CD4-positive, alpha-beta T cell (primary cell): ENCODE measurements at regions of chr5 and their contacts with region 1.

Region 1: GRCh38 chr5:173615884-173616576 is 420 bp downstream of the BOD1 start:
- DNase-seq: peak; percentile 45 to 89 (median 62)
- ATAC-seq: peak; percentile 55
- H3K4me3 ChIP-seq: peak overlapping the region; percentile 69
- H3K4me3 Mint-ChIP-seq: peak overlapping the region; percentile 95
- H3K27ac ChIP-seq: peak overlapping the region; percentile 81 to 96
- H3K27ac Mint-ChIP-seq: peak overlapping the region; percentile 81
- H3K4me1 ChIP-seq: peaks cover 26% of the 10 kb centered on the region
- H3K4me1 Mint-ChIP-seq: peaks cover 51% of the 10 kb centered on the region
- H3K27me3 ChIP-seq: no peaks in the 10 kb centered on the region
- H3K27me3 Mint-ChIP-seq: no peaks in the 10 kb centered on the region
- CTCF ChIP-seq: peak; percentile 82

Region 2: DNA sequence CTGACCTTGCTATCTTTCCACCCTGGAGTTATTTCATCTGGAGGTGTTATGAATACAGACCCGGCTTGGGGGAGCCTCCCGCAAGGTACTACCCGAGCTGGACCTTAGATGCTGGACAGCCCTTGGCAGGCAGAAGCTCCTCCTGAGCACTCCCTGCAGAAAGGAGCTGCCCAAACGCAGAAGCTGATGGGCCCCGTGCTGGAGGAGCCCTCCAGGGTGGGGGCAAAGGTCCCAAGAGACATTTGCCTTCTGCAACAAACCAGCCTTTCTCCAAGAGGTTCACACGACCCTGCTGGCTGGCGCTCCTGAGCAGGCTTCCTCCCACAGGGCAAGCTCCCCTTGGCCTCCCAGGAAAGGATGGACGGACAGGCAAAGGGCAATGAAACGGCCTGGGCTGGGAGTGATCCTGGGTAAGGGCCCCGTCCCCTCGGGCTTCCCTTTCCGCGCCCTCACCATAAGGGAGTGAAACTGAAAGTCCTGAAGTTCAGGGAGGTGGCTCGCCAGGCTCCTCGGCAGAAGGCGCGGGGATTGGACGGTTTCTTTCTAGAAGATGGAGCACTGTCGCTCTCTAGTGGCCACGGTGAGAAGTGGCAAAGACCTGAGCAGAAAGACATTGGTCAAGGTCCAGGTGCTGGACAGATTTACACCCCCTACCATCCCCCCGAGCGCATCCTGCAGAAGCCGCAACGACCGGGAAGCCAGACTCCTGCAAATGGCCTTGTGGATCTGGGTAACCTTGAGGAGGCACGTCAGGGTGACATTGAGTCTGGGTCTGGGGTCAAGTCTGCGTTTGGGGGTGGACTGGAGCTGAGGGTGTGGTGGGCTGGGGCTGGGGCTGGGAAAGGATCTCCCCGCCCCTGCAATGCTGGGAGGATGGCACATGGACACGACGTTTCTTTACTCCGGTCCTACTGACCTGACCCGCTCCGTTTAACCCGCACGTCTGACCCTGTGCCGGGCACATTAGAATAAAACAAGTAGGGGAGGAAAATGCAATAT is 918.6 kb before region 1 on chr5:
- CTCF ChIA-PET with region 1: no interaction called
- POLR2A ChIA-PET with region 1: no interaction called
- intact Hi-C with region 1: loop called in 1 of 2 experiments (anchors 10 kb)
- DNase-seq: peak; percentile 74 to 92 (median 81)
- ATAC-seq: peak; percentile 97
- H3K4me3 ChIP-seq: peak overlapping the region; percentile 89
- H3K4me3 Mint-ChIP-seq: peak overlapping the region; percentile 91
- H3K27ac ChIP-seq: peak overlapping the region in 1 of 2 donors; percentile 75
- H3K27ac Mint-ChIP-seq: peak overlapping the region; percentile 72
- H3K4me1 ChIP-seq: peaks cover 24% of the 10 kb centered on the region
- H3K4me1 Mint-ChIP-seq: peaks cover 24% of the 10 kb centered on the region
- H3K27me3 ChIP-seq: peaks cover 9 to 10% of the 10 kb centered on the region in 2 experiments
- H3K27me3 Mint-ChIP-seq: peaks cover 17% of the 10 kb centered on the region
- CTCF ChIP-seq: peak; percentile 85

Region 3: GRCh38 chr5:173629628-173630027 is 13.6 kb after region 1 on chr5:
- CTCF ChIA-PET with region 1: no interaction called
- POLR2A ChIA-PET with region 1: no interaction called
- intact Hi-C with region 1: no loop called
- DNase-seq: no peak
- ATAC-seq: no peak
- H3K4me3 ChIP-seq: no peak overlapping the region
- H3K4me3 Mint-ChIP-seq: no peak overlapping the region
- H3K27ac ChIP-seq: no peak overlapping the region
- H3K27ac Mint-ChIP-seq: no peak overlapping the region
- H3K4me1 ChIP-seq: no peaks in the 10 kb centered on the region
- H3K4me1 Mint-ChIP-seq: no peaks in the 10 kb centered on the region
- H3K27me3 ChIP-seq: peaks cover 0 to 4% of the 10 kb centered on the region in 2 experiments
- H3K27me3 Mint-ChIP-seq: peaks cover 13% of the 10 kb centered on the region
- CTCF ChIP-seq: no peak

Region 4: DNA sequence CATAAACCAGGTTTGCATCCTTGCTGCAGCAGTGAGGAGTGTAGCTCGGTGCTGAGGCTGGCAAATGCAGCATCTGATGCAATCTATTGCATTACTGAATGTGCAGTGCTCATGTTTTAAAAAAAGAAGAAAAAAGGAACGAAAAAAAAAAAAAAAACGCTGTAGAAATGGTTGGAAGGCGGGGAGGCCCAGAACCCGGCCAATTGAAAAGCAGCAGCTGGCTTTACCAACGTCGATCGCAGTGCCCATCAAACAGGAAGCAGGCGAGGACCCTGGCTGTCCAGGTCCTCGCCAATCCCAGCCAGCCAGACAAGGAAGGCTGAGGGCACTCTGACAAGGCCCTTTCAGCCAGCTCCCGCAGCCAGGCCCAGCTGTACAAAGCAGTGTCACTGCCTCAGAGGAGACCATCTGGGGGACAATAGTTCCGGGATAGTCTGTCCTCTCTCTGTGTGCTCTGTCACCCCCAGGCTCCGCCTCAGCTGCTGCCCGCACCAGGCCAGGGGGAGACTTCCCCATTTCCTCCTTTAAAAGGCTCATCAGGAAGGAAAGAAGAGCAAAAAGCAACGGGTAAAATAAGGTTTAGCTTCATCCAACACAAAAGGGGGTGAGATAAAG is 250.3 kb after region 1 on chr5:
- CTCF ChIA-PET with region 1: no interaction called
- POLR2A ChIA-PET with region 1: no interaction called
- intact Hi-C with region 1: no loop called
- DNase-seq: peak in 2 of 14 experiments; percentile 28 to 39
- ATAC-seq: no peak
- H3K4me3 ChIP-seq: no peak overlapping the region
- H3K4me3 Mint-ChIP-seq: no peak overlapping the region
- H3K27ac ChIP-seq: no peak overlapping the region
- H3K27ac Mint-ChIP-seq: no peak overlapping the region
- H3K4me1 ChIP-seq: peaks cover 2% of the 10 kb centered on the region
- H3K4me1 Mint-ChIP-seq: no peaks in the 10 kb centered on the region
- H3K27me3 ChIP-seq: no peaks in the 10 kb centered on the region
- H3K27me3 Mint-ChIP-seq: no peaks in the 10 kb centered on the region
- CTCF ChIP-seq: no peak

Region 5: DNA sequence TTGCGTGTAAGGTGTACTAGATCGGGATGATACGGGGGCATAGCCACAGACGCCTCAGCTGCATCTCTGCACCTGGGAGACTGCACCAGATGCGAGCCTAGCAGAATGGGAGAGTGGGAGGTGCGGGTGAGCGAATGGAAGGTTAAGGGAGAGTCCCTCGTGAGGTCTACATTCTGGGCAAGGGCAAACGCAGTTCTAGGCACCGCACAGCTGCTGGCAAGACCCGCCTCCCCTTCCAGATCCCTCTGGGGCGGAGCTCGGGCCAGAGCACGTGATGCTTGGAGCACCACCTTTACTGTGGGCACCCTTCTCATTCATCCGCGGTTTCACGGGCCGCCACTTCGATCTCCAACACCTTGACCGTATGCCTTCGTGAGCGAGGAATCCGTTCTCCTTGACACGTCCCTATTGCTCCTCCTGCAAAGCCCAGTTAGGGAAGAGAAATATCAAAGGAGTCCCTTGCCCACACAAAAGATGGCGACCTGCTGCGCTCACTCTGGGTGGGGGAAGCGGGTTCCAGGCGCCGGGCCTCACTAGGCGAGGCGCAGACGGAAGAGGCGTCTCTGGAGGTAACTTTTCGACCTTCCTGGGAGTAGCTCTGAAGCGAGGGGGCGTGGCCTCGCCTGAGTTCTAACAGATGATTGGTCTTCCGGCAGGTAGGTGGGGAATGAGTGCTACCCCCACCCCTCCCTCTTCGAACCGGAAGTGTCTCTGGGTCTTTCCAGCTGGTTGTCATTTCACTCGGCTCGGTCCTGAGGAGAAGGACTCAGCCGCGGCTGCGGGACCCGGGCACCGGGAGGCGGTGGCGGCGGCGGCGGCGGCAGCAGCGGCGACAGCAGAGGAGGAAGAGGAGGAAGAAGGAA is 271.8 kb after region 1 on chr5 and contains the start of gene CPEB4:
- CTCF ChIA-PET with region 1: interaction called, 10 read pairs
- POLR2A ChIA-PET with region 1: interaction called, 18 read pairs
- intact Hi-C with region 1: loop called (anchors 1 to 2 kb)
- DNase-seq: peak; percentile 92 to 100 (median 96)
- ATAC-seq: peak; percentile 94
- H3K4me3 ChIP-seq: peak within 1 kb of the TSS; percentile 87
- H3K4me3 Mint-ChIP-seq: peak within 1 kb of the TSS; percentile 99
- H3K27ac ChIP-seq: peak within 1 kb of the TSS; percentile 77 to 89
- H3K27ac Mint-ChIP-seq: peak within 1 kb of the TSS; percentile 91
- H3K4me1 ChIP-seq: peaks cover 47% of the 10 kb centered on the region
- H3K4me1 Mint-ChIP-seq: peaks cover 90% of the 10 kb centered on the region
- H3K27me3 ChIP-seq: no peaks in the 10 kb centered on the region
- H3K27me3 Mint-ChIP-seq: no peaks in the 10 kb centered on the region
- CTCF ChIP-seq: no peak
- total RNA-seq, gene CPEB4: 18.3 to 19.2 TPM

Region 6: DNA sequence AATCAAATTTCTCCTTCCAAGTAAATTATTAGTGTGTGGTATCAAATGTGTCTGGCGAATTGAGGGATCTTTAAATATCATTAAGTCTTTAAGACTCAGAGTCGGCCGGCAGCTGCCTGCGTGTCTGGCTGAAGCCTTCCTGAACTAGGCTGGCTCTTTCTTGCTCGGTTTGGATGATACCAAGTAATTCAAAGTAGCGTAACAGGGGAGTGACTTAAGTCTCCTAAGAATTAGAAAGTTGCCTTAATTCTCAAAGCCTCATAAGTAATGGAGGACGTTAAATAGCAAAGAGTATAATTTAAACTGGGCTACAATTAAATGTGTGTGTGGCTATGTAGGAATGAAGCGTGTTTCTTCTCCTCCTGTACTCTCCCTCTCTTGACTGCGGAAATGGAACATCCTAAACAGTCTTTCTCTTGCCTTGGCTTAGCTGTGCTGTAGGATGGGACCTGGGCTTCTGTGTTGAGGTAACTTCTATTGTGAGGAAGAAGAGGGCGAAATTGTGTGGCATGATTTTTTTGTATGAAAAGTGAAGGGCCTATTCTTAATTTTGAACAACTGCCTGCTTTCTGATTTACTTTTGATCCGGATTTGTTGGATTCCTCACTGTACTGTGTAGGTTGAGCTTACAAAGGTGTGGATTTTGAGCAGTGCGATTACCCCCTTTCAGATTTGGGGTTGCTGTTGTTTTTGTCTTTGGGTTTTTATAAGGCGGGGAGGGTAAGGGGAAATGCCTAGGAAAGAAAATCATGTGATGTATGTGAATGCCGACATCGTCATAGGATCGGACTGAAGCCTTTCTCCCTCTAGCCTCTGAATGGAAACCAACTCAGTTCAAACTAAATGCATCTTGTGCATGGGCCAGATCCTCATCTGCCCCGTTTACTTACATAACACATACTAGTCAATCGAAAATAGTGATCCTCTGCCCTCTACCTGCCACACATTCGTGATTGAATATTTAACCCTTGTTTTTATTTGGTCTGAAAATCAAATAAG is 302.1 kb after region 1 on chr5:
- CTCF ChIA-PET with region 1: interaction called, 4 read pairs
- POLR2A ChIA-PET with region 1: interaction called, 45 read pairs
- intact Hi-C with region 1: loop called (anchors 1 kb)
- DNase-seq: peak; percentile 34 to 87 (median 54)
- ATAC-seq: peak; percentile 91
- H3K4me3 ChIP-seq: peak overlapping the region; percentile 62
- H3K4me3 Mint-ChIP-seq: no peak overlapping the region
- H3K27ac ChIP-seq: peak overlapping the region; percentile 78 to 80
- H3K27ac Mint-ChIP-seq: no peak overlapping the region
- H3K4me1 ChIP-seq: peaks cover 7% of the 10 kb centered on the region
- H3K4me1 Mint-ChIP-seq: peaks cover 22% of the 10 kb centered on the region
- H3K27me3 ChIP-seq: no peaks in the 10 kb centered on the region
- H3K27me3 Mint-ChIP-seq: no peaks in the 10 kb centered on the region
- CTCF ChIP-seq: no peak

Region 7: DNA sequence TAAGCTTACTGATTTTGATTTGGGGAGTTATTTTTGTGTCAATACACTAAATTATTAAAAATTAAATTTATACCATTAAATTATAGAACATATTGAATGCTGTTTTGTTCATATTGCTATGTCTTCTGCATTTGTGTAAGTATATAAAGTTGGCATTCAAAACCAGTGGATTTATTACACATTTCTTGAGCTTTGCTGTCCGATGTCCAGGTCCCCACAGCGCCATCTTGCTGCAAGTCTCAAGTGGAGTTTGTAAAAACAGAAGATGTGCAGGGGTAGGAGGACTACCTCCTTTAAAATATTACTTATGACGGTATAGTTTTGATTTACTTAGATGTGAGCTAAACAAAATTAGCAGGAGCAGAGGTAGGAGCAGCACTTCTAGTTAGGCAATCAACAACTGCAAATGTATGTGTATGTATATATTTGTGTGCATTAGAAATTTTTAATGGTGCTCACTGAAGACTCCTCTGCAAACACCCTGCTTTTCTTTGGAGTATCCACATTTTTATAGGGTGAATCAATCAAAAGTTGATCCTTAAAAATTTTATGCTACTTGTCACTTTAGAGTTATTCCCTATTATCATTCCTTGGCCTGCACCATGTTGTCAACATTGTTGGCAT is 309.5 kb after region 1 on chr5:
- CTCF ChIA-PET with region 1: interaction called, 6 read pairs
- POLR2A ChIA-PET with region 1: interaction called, 11 read pairs
- intact Hi-C with region 1: loop called in 1 of 2 experiments (anchors 2 kb)
- DNase-seq: peak; percentile 20 to 74 (median 40)
- ATAC-seq: peak; percentile 61
- H3K4me3 ChIP-seq: no peak overlapping the region
- H3K4me3 Mint-ChIP-seq: no peak overlapping the region
- H3K27ac ChIP-seq: no peak overlapping the region
- H3K27ac Mint-ChIP-seq: no peak overlapping the region
- H3K4me1 ChIP-seq: no peaks in the 10 kb centered on the region
- H3K4me1 Mint-ChIP-seq: peaks cover 39% of the 10 kb centered on the region
- H3K27me3 ChIP-seq: no peaks in the 10 kb centered on the region
- H3K27me3 Mint-ChIP-seq: no peaks in the 10 kb centered on the region
- CTCF ChIP-seq: peak; percentile 66

Region 8: DNA sequence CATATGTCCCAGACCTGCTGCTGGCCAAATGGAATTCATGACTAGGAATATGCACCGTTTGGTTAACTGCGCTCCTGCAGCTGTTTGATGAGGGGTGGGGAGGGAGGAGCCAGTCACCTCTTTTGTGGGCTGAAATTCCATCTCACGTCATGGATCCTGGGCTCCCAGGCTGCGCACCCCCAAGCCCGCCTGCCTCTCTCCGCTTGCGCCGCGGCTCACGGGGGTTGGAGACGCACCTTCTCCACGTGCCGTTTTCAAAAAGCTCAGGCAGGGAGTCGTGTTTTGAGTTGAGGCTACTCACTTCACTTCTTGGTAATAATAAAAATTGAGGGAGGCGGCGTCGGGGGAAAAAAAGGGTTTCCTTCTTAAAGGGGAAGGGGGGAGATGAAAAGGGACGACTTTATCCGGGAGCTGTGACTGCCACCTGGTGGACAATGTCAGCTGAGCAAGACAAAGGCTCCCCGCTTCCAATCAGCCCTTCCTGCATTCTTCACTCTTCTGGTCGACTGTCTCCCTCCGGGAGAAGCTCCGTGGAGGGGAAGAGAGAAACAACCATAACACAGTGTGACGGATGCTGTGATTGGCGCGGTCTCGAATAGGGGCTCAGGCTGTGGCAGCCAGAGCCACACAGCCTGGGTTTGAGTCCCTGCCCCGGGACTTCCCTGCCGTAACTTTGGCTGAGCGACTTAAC is 357.0 kb after region 1 on chr5:
- CTCF ChIA-PET with region 1: interaction called, 22 read pairs
- POLR2A ChIA-PET with region 1: interaction called, 18 read pairs
- intact Hi-C with region 1: loop called (anchors 1 kb)
- DNase-seq: peak; percentile 62 to 86 (median 68)
- ATAC-seq: peak; percentile 82
- H3K4me3 ChIP-seq: peak overlapping the region; percentile 45
- H3K4me3 Mint-ChIP-seq: peak overlapping the region; percentile 82
- H3K27ac ChIP-seq: no peak overlapping the region
- H3K27ac Mint-ChIP-seq: no peak overlapping the region
- H3K4me1 ChIP-seq: peaks cover 14% of the 10 kb centered on the region
- H3K4me1 Mint-ChIP-seq: peaks cover 12% of the 10 kb centered on the region
- H3K27me3 ChIP-seq: peaks cover 0 to 4% of the 10 kb centered on the region in 2 experiments
- H3K27me3 Mint-ChIP-seq: peaks cover 20% of the 10 kb centered on the region
- CTCF ChIP-seq: peak; percentile 79

Region 9: DNA sequence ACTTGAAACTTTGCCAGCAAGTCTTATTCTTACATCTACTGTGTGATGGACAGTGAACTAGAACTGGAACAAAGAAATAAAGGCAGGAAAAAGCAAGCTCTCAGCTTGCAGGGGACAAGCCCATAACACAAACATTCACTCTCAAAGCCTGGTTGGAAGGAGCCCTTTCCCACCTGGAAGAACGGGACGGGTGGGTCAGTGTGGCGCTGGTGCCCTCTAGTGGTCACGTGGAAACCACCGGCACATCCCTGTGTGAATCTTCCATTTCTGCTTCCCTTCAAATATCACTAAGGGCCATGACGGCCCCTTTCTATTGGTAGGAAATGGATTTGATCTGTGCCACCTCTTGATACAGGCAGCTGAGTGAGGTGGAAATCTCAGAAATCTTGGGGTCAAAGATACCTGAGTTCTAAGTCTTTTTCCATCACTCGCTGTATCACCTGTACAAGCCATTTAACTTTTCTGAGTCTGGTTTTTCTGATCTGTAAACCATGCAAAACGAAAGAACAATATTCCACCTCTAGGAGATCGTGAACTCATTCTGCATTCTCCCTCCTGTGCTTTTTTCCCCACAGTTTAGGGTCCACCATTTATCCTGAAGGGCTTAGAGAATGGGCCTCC is 1319.9 kb after region 1 on chr5:
- CTCF ChIA-PET with region 1: no interaction called
- POLR2A ChIA-PET with region 1: no interaction called
- intact Hi-C with region 1: loop called in 1 of 2 experiments (anchors 5 kb)
- DNase-seq: peak; percentile 3 to 48 (median 16)
- ATAC-seq: no peak
- H3K4me3 ChIP-seq: no peak overlapping the region
- H3K4me3 Mint-ChIP-seq: no peak overlapping the region
- H3K27ac ChIP-seq: no peak overlapping the region
- H3K27ac Mint-ChIP-seq: no peak overlapping the region
- H3K4me1 ChIP-seq: no peaks in the 10 kb centered on the region
- H3K4me1 Mint-ChIP-seq: no peaks in the 10 kb centered on the region
- H3K27me3 ChIP-seq: peaks cover 2 to 4% of the 10 kb centered on the region in 2 experiments
- H3K27me3 Mint-ChIP-seq: peaks cover 33% of the 10 kb centered on the region
- CTCF ChIP-seq: peak; percentile 79